GM12878 (cell line): ENCODE measurements at regions of chr1 and their contacts with region 1.

Region 1: GRCh38 chr1:98688110-98688739 is 26.7 kb downstream of the SNX7 start:
- DNase-seq: peak; percentile 7
- ATAC-seq: peak; percentile 95
- H3K4me3 ChIP-seq: no peak overlapping the region
- H3K27ac ChIP-seq: no peak overlapping the region
- H3K4me1 ChIP-seq: no peaks in the 10 kb centered on the region
- H3K27me3 ChIP-seq: no peaks in the 10 kb centered on the region
- CTCF ChIP-seq: no peak
- EP300 ChIP-seq: peak; percentile 65 to 74; a peak in 2 of 4 replicates
- POLR2A ChIP-seq: no peak
- RAD21 ChIP-seq: no peak

Region 2: DNA sequence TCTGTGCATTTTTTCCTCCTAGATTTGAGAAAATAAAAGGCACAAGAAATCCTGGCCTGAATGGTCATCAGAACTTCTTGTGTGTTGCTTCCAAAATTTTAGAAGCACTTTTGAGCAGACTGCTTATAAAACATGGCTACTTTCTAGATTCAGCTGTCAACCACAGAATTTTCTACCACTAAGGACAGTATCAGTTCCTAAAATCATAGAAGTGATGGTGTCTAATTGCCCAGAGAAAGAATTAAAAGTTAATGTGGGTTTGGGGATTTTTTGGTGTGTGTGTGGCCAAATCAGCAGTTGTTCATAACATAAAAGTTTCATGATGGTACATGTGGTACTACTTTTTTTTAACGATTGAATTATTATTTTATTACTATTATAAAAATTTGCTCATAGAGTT is 198.1 kb before region 1 on chr1:
- CTCF ChIA-PET with region 1: no interaction called
- POLR2A ChIA-PET with region 1: no interaction called
- RAD21 ChIA-PET with region 1: no interaction called
- SMC1A ChIA-PET with region 1: no interaction called
- in situ Hi-C with region 1: no loop called
- intact Hi-C with region 1: loop called (anchors 5 kb)
- DNase-seq: peak; percentile 51
- ATAC-seq: peak; percentile 96
- H3K4me3 ChIP-seq: no peak overlapping the region
- H3K27ac ChIP-seq: no peak overlapping the region
- H3K4me1 ChIP-seq: no peaks in the 10 kb centered on the region
- H3K27me3 ChIP-seq: no peaks in the 10 kb centered on the region
- CTCF ChIP-seq: no peak
- EP300 ChIP-seq: peak; percentile 79 to 83; a peak in 3 of 4 replicates
- POLR2A ChIP-seq: no peak
- RAD21 ChIP-seq: no peak

Region 3: GRCh38 chr1:98637316-98637715 is 50.9 kb before region 1 on chr1:
- CTCF ChIA-PET with region 1: no interaction called
- POLR2A ChIA-PET with region 1: no interaction called
- RAD21 ChIA-PET with region 1: no interaction called
- SMC1A ChIA-PET with region 1: no interaction called
- in situ Hi-C with region 1: no loop called
- intact Hi-C with region 1: no loop called
- DNase-seq: no peak
- ATAC-seq: no peak
- H3K4me3 ChIP-seq: no peak overlapping the region
- H3K27ac ChIP-seq: no peak overlapping the region
- H3K4me1 ChIP-seq: no peaks in the 10 kb centered on the region
- H3K27me3 ChIP-seq: no peaks in the 10 kb centered on the region
- CTCF ChIP-seq: no peak
- EP300 ChIP-seq: no peak
- POLR2A ChIP-seq: no peak
- RAD21 ChIP-seq: no peak

Region 4: DNA sequence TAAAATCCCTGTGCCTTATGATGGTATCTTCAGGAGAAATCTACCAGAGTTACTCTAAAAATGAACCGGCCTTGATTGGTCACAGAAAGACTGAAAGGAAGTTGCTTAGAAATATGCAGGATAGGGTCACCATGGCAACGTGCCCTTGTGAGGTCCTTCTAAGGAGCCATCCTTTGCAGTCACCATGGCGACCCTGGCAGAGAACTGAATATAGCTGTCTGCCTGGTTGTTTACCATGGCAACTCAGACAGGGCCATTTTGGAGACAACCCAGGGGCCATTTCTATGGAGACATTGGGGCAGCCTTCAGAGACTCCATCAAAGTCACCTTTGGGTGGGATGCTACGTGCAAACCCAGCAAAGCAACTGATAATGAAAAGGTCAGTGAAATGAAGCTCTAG is 16.2 kb after region 1 on chr1:
- CTCF ChIA-PET with region 1: interaction called, 4 read pairs
- POLR2A ChIA-PET with region 1: no interaction called
- RAD21 ChIA-PET with region 1: interaction called, 7 read pairs
- SMC1A ChIA-PET with region 1: interaction called, 7 read pairs
- in situ Hi-C with region 1: no loop called
- intact Hi-C with region 1: loop called (anchors 2 kb)
- DNase-seq: no peak
- ATAC-seq: peak; percentile 46
- H3K4me3 ChIP-seq: no peak overlapping the region
- H3K27ac ChIP-seq: no peak overlapping the region
- H3K4me1 ChIP-seq: no peaks in the 10 kb centered on the region
- H3K27me3 ChIP-seq: no peaks in the 10 kb centered on the region
- CTCF ChIP-seq: no peak
- EP300 ChIP-seq: no peak
- POLR2A ChIP-seq: no peak
- RAD21 ChIP-seq: no peak

Region 5: GRCh38 chr1:98910827-98911226 is 222.6 kb after region 1 on chr1:
- CTCF ChIA-PET with region 1: no interaction called
- POLR2A ChIA-PET with region 1: no interaction called
- RAD21 ChIA-PET with region 1: no interaction called
- SMC1A ChIA-PET with region 1: no interaction called
- in situ Hi-C with region 1: no loop called
- intact Hi-C with region 1: no loop called
- DNase-seq: no peak
- ATAC-seq: no peak
- H3K4me3 ChIP-seq: no peak overlapping the region
- H3K27ac ChIP-seq: no peak overlapping the region
- H3K4me1 ChIP-seq: no peaks in the 10 kb centered on the region
- H3K27me3 ChIP-seq: no peaks in the 10 kb centered on the region
- CTCF ChIP-seq: no peak
- EP300 ChIP-seq: no peak
- POLR2A ChIP-seq: no peak
- RAD21 ChIP-seq: no peak